ENCODE measurements at regions of chr11 and their contacts with region 1.

Region 1: DNA sequence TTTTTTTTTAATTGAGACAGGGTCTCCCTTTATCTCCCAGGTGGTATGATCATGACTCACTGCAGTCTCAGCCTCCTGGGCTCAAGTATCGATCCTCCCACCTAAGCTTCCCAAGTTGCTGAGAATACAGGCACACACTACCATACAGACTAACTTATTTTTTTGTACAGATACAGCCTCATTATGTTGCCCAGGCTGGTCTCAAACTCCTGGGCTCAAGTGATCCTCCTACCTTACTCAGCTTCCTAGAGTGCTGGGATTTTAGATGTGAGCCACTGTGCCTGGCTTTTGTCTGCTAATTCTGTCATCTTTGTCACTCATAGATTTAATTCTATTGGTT is 43.5 kb downstream of the CBL start:
- DNase-seq: no peak
- H3K4me3 ChIP-seq: no peak overlapping the region
- H3K27ac ChIP-seq: no peak overlapping the region
- H3K4me1 ChIP-seq: peaks cover 63% of the 10 kb centered on the region
- CTCF ChIP-seq: no peak

Region 2: GRCh38 chr11:118163494-118163893 is 1086.1 kb before region 1 on chr11:
- CTCF ChIA-PET with region 1: interaction called, 10 read pairs
- POLR2A ChIA-PET with region 1: no interaction called
- intact Hi-C with region 1: no loop called
- DNase-seq: no peak
- H3K4me3 ChIP-seq: no peak overlapping the region
- H3K27ac ChIP-seq: no peak overlapping the region
- H3K4me1 ChIP-seq: no peaks in the 10 kb centered on the region
- CTCF ChIP-seq: no peak

Region 3: GRCh38 chr11:119205574-119206510 is 43.8 kb before region 1 on chr11 and contains the start of gene CBL:
- CTCF ChIA-PET with region 1: interaction called, 9 read pairs
- POLR2A ChIA-PET with region 1: interaction called, 18 read pairs
- intact Hi-C with region 1: loop called (anchors 1 kb)
- DNase-seq: peak; percentile 92
- H3K4me3 ChIP-seq: peak within 1 kb of the TSS; percentile 100
- H3K27ac ChIP-seq: peak within 1 kb of the TSS; percentile 78
- H3K4me1 ChIP-seq: peaks cover 31% of the 10 kb centered on the region
- CTCF ChIP-seq: peak; percentile 89
- total RNA-seq, gene CBL: 19.1 and 19.2 TPM in 2 replicates

Region 4: DNA sequence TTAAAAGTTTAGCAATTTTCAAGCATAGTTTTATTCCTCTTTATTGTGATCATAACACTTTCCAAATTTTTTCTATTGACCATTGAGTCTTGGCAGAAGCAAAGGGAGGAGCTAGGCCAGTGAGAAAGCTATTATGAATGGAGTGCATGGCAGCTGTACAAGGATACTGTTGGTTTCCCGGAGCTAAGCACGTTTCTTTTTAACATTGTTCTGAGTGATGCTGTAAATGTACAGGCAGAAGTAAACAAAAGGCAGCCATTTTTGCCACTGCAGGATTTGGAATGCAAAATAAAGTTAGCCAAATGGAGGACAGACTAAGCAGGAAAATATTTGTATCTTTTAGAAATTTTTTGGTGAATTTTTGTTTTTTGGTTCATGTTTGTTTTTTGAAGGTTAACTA is 27.3 kb before region 1 on chr11:
- CTCF ChIA-PET with region 1: no interaction called
- POLR2A ChIA-PET with region 1: interaction called, 10 read pairs
- intact Hi-C with region 1: no loop called
- DNase-seq: no peak
- H3K4me3 ChIP-seq: no peak overlapping the region
- H3K27ac ChIP-seq: no peak overlapping the region
- H3K4me1 ChIP-seq: peaks cover 7% of the 10 kb centered on the region
- CTCF ChIP-seq: no peak

Region 5: GRCh38 chr11:119306373-119306890 is 56.8 kb after region 1 on chr11:
- CTCF ChIA-PET with region 1: no interaction called
- POLR2A ChIA-PET with region 1: no interaction called
- intact Hi-C with region 1: no loop called
- DNase-seq: no peak
- H3K4me3 ChIP-seq: no peak overlapping the region
- H3K27ac ChIP-seq: no peak overlapping the region
- H3K4me1 ChIP-seq: no peaks in the 10 kb centered on the region
- CTCF ChIP-seq: no peak

Measured in OCI-LY7 (cell line).